Sigmoid colon (tissue), 7 donors: ENCODE measurements at regions of chr5 and their contacts with region 1.

Region 1: DNA sequence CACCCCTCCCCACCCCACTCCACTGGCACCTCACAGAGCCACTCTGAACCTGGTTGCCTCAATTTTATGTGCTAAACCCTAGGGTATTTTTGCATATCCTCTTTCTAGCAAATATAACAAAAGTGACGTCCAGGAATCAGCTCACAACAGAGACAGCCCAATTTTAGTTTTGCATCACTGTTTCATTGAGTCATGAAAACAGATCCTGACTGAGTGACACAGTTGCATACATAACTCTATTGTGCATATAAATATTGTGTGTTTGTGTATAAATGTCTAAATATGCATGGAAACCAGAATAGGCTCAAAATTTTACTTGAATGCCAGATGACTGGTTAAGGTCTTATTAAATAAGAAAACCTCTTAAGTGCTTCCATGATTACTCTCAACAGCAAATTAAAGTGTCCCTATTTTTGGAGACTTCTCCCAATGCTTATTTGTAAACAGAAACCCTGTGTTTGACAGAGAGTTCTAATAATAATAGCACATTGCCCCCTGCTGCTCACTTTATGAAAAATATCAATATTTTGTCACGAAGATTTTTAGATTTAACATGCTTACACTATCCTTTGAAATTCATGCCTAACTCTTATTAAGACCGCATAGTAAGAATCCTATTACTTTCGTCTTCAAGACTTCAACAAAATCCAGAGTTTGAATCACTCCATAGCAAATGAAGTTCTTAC is 75.5 kb upstream of the PRRC1 start:
- DNase-seq: no peak
- H3K4me3 ChIP-seq: no peak overlapping the region
- H3K27ac ChIP-seq: no peak overlapping the region
- H3K4me1 ChIP-seq: no peaks in the 10 kb centered on the region
- H3K27me3 ChIP-seq: no peaks in the 10 kb centered on the region
- CTCF ChIP-seq: no peak
- EP300 ChIP-seq: no peak
- POLR2A ChIP-seq: no peak

Region 2: GRCh38 chr5:127290019-127290945 is 151.7 kb before region 1 on chr5 and contains the start of gene MEGF10:
- intact Hi-C with region 1: loop called (anchors 5 kb)
- DNase-seq: no peak
- H3K4me3 ChIP-seq: peak within 1 kb of the TSS; percentile 1 to 34 (median 32)
- H3K27ac ChIP-seq: no peak within 1 kb of the TSS
- H3K4me1 ChIP-seq: peaks cover 0 to 12% (median 5%) of the 10 kb centered on the region in 4 donors
- H3K27me3 ChIP-seq: peaks cover 8 to 32% (median 19%) of the 10 kb centered on the region in 3 donors
- CTCF ChIP-seq: peak in 2 of 4 experiments; percentile 6 to 26
- EP300 ChIP-seq: no peak
- POLR2A ChIP-seq: no peak
- total RNA-seq, gene MEGF10: 1.2 to 3.6 (median 2.7) TPM

Region 3: GRCh38 chr5:127492854-127493738 is 51.2 kb after region 1 on chr5:
- intact Hi-C with region 1: no loop called
- DNase-seq: no peak
- H3K4me3 ChIP-seq: no peak overlapping the region
- H3K27ac ChIP-seq: no peak overlapping the region
- H3K4me1 ChIP-seq: no peaks in the 10 kb centered on the region
- H3K27me3 ChIP-seq: peaks cover 0 to 3% (median 0%) of the 10 kb centered on the region in 3 donors
- CTCF ChIP-seq: peak in 3 of 4 experiments; percentile 53 to 61 (median 58)
- EP300 ChIP-seq: no peak
- POLR2A ChIP-seq: no peak